ENCODE measurements at regions of chr12 and their contacts with region 1.

Region 1: DNA sequence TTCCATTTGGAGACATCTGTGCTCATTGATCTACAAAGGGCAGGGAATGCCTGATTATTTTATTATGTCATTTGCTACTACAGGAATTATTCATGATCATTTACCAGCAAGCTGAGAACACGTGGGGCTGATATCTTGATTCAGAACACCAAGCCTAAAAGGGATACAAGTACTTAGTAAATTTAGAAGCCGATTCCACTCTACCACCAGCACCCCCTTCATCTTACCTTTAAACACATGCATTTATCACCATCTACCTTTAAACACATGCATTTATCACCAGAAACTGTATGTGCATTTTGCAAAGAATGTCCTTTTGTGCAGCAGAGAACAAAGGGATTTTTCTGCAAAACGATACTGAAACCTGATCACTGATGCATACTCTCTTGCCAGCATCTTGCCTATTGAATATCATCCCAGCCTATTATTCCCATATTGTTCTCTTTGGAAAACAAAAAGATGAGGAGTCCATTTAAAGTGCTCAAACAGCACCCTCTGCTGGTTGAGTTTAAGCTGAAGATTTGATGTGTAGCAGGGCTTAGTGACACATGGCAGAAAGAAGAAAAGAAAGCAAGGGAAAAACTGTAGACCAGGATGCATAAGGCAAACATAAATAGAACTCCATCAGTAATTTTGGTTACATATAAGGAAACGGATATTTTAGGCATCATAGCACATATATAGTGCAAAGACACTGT is 132.6 kb upstream of the PLEKHG7 start:
- H3K4me3 Mint-ChIP-seq: no peak overlapping the region
- H3K27ac Mint-ChIP-seq: no peak overlapping the region
- H3K4me1 Mint-ChIP-seq: peaks cover 17% of the 10 kb centered on the region
- H3K27me3 Mint-ChIP-seq: no peaks in the 10 kb centered on the region

Region 2: GRCh38 chr12:91382081-91382543 is 1188.1 kb before region 1 on chr12:
- intact Hi-C with region 1: loop called (anchors 5 kb)
- H3K4me3 Mint-ChIP-seq: peak overlapping the region; percentile 62
- H3K27ac Mint-ChIP-seq: no peak overlapping the region
- H3K4me1 Mint-ChIP-seq: peaks cover 21% of the 10 kb centered on the region
- H3K27me3 Mint-ChIP-seq: peaks cover 8% of the 10 kb centered on the region

Region 3: DNA sequence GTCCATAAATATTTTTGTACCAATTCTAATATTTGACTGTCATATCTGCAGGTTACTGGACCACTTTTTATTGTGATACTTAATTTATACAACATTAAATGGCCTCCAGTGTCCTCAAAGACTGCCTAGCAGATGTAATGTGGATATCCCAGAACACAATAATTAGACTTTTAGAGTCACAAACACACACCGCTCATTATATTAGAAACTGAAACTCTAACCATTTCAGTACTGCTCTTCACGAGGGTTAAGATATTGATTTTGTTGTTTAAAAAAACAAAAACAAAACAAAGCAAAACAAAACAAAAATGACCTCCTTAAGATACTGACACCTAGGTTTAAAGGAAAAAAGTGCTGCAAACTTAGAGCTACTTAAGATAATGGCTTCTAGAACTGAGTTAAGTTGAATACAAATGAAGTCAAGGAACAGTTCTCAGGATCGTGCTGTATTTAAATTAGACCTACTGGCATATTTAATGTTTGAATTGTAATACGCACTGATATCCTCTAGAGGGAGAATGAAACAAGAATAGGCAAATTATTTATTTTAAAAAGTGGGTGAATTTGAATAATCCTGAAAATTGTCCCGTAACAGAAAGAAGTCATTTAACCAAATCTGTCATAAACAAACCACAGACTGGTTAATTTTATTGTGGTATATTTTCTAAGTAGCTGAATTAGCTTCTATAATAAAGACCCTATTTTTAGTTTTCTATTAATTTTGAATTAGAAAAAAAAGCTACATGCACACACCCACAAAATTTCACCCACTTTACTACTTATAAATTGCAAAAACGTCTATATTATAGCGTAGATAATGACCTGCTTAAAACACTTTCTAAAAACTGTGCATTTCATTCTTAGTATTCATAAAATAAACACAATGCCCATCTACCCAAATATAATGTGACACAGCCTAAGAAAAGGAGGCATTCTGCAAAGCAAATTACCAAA is 992.3 kb before region 1 on chr12:
- intact Hi-C with region 1: loop called (anchors 10 kb)
- H3K4me3 Mint-ChIP-seq: peak overlapping the region; percentile 13
- H3K27ac Mint-ChIP-seq: no peak overlapping the region
- H3K4me1 Mint-ChIP-seq: no peaks in the 10 kb centered on the region
- H3K27me3 Mint-ChIP-seq: peaks cover 2% of the 10 kb centered on the region

Region 4: DNA sequence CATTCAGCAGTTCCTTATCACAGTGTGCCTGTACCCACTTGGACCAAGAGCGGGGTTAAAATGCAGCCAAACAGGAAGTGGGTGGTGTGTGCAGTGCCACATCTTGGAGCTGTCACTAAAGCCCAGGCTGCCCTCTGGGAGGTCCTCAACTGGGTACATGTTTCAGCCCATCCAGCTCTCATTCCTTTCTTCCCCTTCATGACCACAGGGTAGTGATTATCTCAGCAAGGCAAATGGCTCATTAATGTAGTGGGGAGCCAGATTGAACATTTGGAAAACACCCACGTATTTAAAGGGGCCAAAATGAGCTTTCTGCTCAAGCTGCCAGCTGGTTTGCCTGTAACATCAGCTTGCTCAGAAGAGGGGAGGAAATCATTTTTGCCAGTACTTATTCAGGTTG is 213.8 kb before region 1 on chr12:
- intact Hi-C with region 1: no loop called
- H3K4me3 Mint-ChIP-seq: no peak overlapping the region
- H3K27ac Mint-ChIP-seq: no peak overlapping the region
- H3K4me1 Mint-ChIP-seq: peaks cover 6% of the 10 kb centered on the region
- H3K27me3 Mint-ChIP-seq: no peaks in the 10 kb centered on the region

Region 5: GRCh38 chr12:92505254-92506231 is 64.7 kb before region 1 on chr12:
- intact Hi-C with region 1: loop called (anchors 2 kb)
- H3K4me3 Mint-ChIP-seq: peak overlapping the region; percentile 59
- H3K27ac Mint-ChIP-seq: peak overlapping the region; percentile 95
- H3K4me1 Mint-ChIP-seq: peaks cover 55% of the 10 kb centered on the region
- H3K27me3 Mint-ChIP-seq: no peaks in the 10 kb centered on the region

Measured in dendritic cell treated with granulocyte-macrophage colony-stimulating factor and Interleukin-4, amounts not matched to agents 40 ng/mL and 50 ng/mL, for 4 days (primary cell).